WTC11 (cell line): ENCODE measurements at regions of chr16 and their contacts with region 1.

Region 1: GRCh38 chr16:9008601-9009260 is 45.0 kb upstream of the USP7 start:
- DNase-seq: peak; percentile 92
- ATAC-seq: peak; percentile 88
- H3K4me3 Mint-ChIP-seq: peak overlapping the region; percentile 25; the same call in 1 of the 2 replicates
- H3K27ac Mint-ChIP-seq: no peak overlapping the region
- H3K4me1 Mint-ChIP-seq: peaks cover 6% of the 10 kb centered on the region
- H3K27me3 Mint-ChIP-seq: no peaks in the 10 kb centered on the region; the same call in none of the 2 replicates
- CTCF ChIP-seq: peak; percentile 80

Region 2: DNA sequence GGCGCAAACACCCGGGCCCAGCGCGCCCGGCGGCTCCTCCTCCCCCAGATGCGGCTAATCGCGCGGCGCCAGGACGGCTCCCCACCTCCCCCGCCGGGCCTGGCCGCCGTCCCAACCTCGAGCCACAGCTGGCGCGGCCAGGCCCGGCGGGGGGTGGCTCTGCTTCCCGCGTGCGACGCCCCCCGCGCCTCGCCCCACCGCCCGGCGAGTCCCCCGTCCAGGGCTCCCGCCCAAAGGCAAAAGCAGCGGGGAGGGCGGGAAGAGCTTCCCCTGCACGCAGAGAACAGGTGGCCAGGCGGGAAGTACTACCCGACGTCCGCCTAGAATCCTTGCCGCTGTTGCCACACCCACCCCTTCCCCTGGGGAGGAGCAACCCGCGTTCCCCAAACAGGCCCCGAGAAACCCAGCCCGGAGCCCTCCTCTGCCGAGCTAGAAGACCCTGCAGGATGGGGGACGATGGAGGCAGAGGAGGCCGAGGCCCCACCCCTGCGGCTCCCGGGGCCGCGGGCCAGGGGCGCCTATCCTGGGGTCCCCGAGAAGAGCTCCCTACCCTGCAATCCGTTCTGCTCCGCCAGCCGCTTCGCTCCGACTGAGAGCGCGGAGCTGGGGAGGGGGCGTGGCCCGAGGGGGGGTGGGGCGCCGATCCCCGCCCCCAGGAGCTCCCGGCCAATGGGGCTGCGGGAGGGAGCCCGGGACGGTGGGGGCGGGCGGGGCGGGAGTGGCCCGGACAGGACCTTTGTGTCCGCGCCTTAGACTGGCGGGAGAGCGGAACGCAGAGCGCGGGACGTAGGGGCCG is 140.1 kb before region 1 on chr16 and contains the start of gene CARHSP1:
- CTCF ChIA-PET with region 1: interaction called, 13 read pairs
- POLR2A ChIA-PET with region 1: no interaction called
- DNase-seq: peak; percentile 92
- ATAC-seq: peak; percentile 59
- H3K4me3 Mint-ChIP-seq: peak within 1 kb of the TSS; percentile 89
- H3K27ac Mint-ChIP-seq: peak within 1 kb of the TSS; percentile 99
- H3K4me1 Mint-ChIP-seq: peaks cover 40% of the 10 kb centered on the region
- H3K27me3 Mint-ChIP-seq: no peaks in the 10 kb centered on the region
- CTCF ChIP-seq: no peak
- total RNA-seq, gene CARHSP1: 260 to 271 TPM (median 261 TPM) in 3 replicates

Region 3: GRCh38 chr16:8905168-8905762 is 103.5 kb before region 1 on chr16:
- CTCF ChIA-PET with region 1: interaction called, 24 read pairs
- POLR2A ChIA-PET with region 1: no interaction called
- DNase-seq: no peak
- ATAC-seq: peak; percentile 63
- H3K4me3 Mint-ChIP-seq: no peak overlapping the region
- H3K27ac Mint-ChIP-seq: peak overlapping the region; percentile 51; the same call in 1 of the 2 replicates
- H3K4me1 Mint-ChIP-seq: 0 out of 2 replicates have a peak, but pooled peaks cover 3% of the 10 kb centered on the region
- H3K27me3 Mint-ChIP-seq: no peaks in the 10 kb centered on the region
- CTCF ChIP-seq: no peak

Region 4: GRCh38 chr16:8943966-8944759 is 64.6 kb before region 1 on chr16:
- CTCF ChIA-PET with region 1: interaction called, 61 read pairs
- POLR2A ChIA-PET with region 1: interaction called, 3 read pairs
- DNase-seq: no peak
- ATAC-seq: no peak
- H3K4me3 Mint-ChIP-seq: no peak overlapping the region
- H3K27ac Mint-ChIP-seq: peak overlapping the region; percentile 70
- H3K4me1 Mint-ChIP-seq: peaks cover 89% of the 10 kb centered on the region
- H3K27me3 Mint-ChIP-seq: no peaks in the 10 kb centered on the region
- CTCF ChIP-seq: no peak

Region 5: DNA sequence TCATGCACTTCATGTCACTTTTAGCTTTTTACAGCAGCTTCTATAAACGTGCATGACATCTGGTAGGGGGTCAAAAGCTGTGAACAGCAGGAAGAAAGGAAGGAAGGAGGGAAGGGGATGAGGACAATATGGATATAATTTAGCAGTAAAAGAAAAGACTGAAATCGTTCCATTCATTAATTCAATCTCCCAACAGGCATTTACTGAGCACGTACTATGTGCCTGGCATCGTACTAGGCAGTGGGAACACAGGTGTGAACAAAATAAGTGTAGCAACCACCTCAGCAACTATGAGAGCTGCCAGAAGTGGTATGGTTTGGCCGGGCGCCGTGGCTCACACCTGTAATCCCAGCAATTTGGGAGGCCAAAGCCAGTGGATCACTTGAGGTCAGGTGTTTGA is 25.9 kb before region 1 on chr16:
- CTCF ChIA-PET with region 1: interaction called, 20 read pairs
- POLR2A ChIA-PET with region 1: interaction called, 3 read pairs
- DNase-seq: no peak
- ATAC-seq: no peak
- H3K4me3 Mint-ChIP-seq: no peak overlapping the region
- H3K27ac Mint-ChIP-seq: no peak overlapping the region
- H3K4me1 Mint-ChIP-seq: peaks cover 12% of the 10 kb centered on the region
- H3K27me3 Mint-ChIP-seq: peaks cover 33% of the 10 kb centered on the region
- CTCF ChIP-seq: no peak

Region 6: GRCh38 chr16:9047686-9048301 is 39.1 kb after region 1 on chr16:
- CTCF ChIA-PET with region 1: interaction called, 36 read pairs
- POLR2A ChIA-PET with region 1: no interaction called
- DNase-seq: peak; percentile 24
- ATAC-seq: peak; percentile 80
- H3K4me3 Mint-ChIP-seq: no peak overlapping the region
- H3K27ac Mint-ChIP-seq: no peak overlapping the region; the same call in none of the 2 replicates
- H3K4me1 Mint-ChIP-seq: peaks cover 18% of the 10 kb centered on the region
- H3K27me3 Mint-ChIP-seq: no peaks in the 10 kb centered on the region
- CTCF ChIP-seq: no peak

Region 7: GRCh38 chr16:9372934-9373890 is 364.5 kb after region 1 on chr16:
- CTCF ChIA-PET with region 1: no interaction called
- POLR2A ChIA-PET with region 1: no interaction called
- DNase-seq: no peak
- ATAC-seq: peak; percentile 77
- H3K4me3 Mint-ChIP-seq: no peak overlapping the region
- H3K27ac Mint-ChIP-seq: no peak overlapping the region; the same call in 1 of the 2 replicates
- H3K4me1 Mint-ChIP-seq: peaks cover 29% of the 10 kb centered on the region
- H3K27me3 Mint-ChIP-seq: no peaks in the 10 kb centered on the region; the same call in 1 of the 2 replicates
- CTCF ChIP-seq: no peak